ENCODE measurements at regions of chr14 and their contacts with region 1.

Region 1: DNA sequence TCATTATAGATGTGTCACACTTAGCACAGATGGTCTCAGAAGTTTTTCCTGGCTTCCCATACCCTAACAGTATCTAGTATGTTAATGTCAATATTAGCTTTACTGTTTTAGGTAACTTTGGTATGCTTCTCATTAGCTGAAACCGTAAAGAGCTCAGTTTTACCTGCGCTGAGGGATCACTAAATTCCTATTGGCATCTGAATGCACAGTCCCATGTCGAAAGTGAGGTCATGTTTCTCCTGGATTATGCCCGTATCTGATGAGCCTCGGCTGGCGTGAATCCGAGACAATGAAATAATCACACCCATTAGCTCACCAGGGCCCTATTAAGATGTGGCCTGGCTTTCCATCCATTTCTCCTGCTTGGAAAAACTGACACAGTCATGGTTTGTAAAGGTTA is 418.2 kb downstream of the ZFP36L1 start:
- DNase-seq: no peak
- ATAC-seq: no peak
- H3K4me3 ChIP-seq: no peak overlapping the region
- H3K27ac ChIP-seq: no peak overlapping the region; the same call in 1 of the 2 replicates
- H3K4me1 ChIP-seq: 0 out of 2 replicates have a peak, but pooled peaks cover 3% of the 10 kb centered on the region
- H3K27me3 ChIP-seq: no peaks in the 10 kb centered on the region
- CTCF ChIP-seq: no peak

Region 2: DNA sequence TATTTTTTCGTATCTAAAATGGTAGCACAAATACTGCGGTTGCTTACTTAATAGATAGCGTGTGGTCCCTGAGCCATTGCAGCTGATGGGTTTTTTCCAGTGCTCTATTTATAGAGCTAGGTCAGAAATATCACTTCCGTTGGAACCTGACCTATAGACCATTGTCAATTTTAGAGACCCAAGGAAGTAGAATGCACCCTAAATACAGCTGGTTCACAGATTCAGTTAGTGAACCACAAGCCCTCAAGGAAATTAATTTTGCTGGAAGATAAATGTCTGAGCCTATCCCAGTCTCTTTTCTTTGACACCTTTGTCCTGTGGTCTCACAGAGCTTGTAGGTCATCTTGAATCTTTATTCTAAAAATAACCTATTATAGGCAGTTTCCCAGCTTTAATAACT is 27.2 kb after region 1 on chr14:
- CTCF ChIA-PET with region 1: no interaction called
- POLR2A ChIA-PET with region 1: no interaction called
- in situ Hi-C with region 1: no loop called
- intact Hi-C with region 1: no loop called
- DNase-seq: no peak
- ATAC-seq: no peak
- H3K4me3 ChIP-seq: no peak overlapping the region
- H3K27ac ChIP-seq: no peak overlapping the region
- H3K4me1 ChIP-seq: no peaks in the 10 kb centered on the region; the same call in 1 of the 2 replicates
- H3K27me3 ChIP-seq: no peaks in the 10 kb centered on the region
- CTCF ChIP-seq: no peak

Region 3: GRCh38 chr14:68506021-68506644 is 131.5 kb after region 1 on chr14:
- CTCF ChIA-PET with region 1: no interaction called
- POLR2A ChIA-PET with region 1: interaction called, 14 read pairs
- in situ Hi-C with region 1: no loop called
- intact Hi-C with region 1: no loop called
- DNase-seq: no peak
- ATAC-seq: no peak
- H3K4me3 ChIP-seq: no peak overlapping the region
- H3K27ac ChIP-seq: no peak overlapping the region
- H3K4me1 ChIP-seq: no peaks in the 10 kb centered on the region
- H3K27me3 ChIP-seq: no peaks in the 10 kb centered on the region
- CTCF ChIP-seq: no peak